Sigmoid colon (tissue), 7 donors: ENCODE measurements at regions of chr17 and their contacts with region 1.

Region 1: DNA sequence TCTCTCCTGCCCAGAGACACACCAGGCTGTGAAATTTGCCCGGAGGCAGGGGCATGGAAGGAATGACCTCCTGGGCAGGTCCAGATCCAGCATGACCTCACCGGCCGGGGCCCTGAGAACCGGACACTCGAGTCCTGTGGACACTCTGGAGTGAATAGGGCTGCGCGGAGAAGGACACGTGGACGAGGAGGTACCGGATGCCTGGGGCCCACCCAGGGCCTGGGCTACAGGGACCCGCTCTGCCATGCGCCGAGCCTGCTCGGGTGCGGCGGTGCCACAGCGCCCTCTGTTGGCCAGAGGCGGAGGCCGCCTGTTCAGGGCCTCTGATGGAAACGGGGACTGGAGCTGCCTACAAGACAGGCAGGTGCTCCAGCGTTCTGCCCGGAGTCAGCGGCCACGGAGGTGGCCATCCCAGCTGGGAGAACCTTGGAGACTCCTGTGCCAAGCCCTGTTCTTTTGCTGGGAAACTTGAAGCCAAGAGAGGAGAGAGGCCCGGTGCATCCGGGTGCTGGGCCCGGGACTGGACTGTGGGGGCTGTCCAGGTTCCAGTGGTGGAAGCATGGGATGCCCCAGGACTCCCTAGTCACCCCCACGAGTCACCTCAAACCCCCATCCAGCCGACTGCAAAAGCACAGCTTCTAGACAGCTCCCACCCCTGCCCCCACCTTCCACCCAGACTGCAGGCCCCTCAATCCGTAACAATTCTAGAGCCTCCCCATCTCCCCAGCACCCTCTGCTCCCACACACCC is 19.3 kb upstream of the NXPH3 start:
- DNase-seq: peak; percentile 88
- H3K4me3 ChIP-seq: no peak overlapping the region
- H3K27ac ChIP-seq: no peak overlapping the region
- H3K4me1 ChIP-seq: peaks cover 0 to 8% (median 7%) of the 10 kb centered on the region in 4 donors
- H3K27me3 ChIP-seq: no peaks in the 10 kb centered on the region
- CTCF ChIP-seq: peak; percentile 91 to 100 (median 94)
- EP300 ChIP-seq: no peak
- POLR2A ChIP-seq: no peak

Region 2: GRCh38 chr17:49315551-49316257 is 240.7 kb before region 1 on chr17:
- intact Hi-C with region 1: loop called (anchors 5 kb)
- DNase-seq: peak; percentile 89
- H3K4me3 ChIP-seq: no peak overlapping the region
- H3K27ac ChIP-seq: peak overlapping the region in 3 of 4 donors; percentile 23 to 44 (median 38)
- H3K4me1 ChIP-seq: peaks cover 0 to 42% (median 33%) of the 10 kb centered on the region in 4 donors
- H3K27me3 ChIP-seq: no peaks in the 10 kb centered on the region
- CTCF ChIP-seq: peak; percentile 52 to 83 (median 62)
- EP300 ChIP-seq: no peak
- POLR2A ChIP-seq: no peak

Region 3: GRCh38 chr17:49407981-49408501 is 148.4 kb before region 1 on chr17:
- intact Hi-C with region 1: loop called (anchors 5 kb)
- DNase-seq: peak; percentile 87
- H3K4me3 ChIP-seq: no peak overlapping the region
- H3K27ac ChIP-seq: peak overlapping the region in 1 of 4 donors; percentile 26
- H3K4me1 ChIP-seq: peaks cover 0 to 10% (median 8%) of the 10 kb centered on the region in 4 donors
- H3K27me3 ChIP-seq: no peaks in the 10 kb centered on the region
- CTCF ChIP-seq: peak in 3 of 4 experiments; percentile 28 to 54 (median 36)
- EP300 ChIP-seq: no peak
- POLR2A ChIP-seq: no peak

Region 4: DNA sequence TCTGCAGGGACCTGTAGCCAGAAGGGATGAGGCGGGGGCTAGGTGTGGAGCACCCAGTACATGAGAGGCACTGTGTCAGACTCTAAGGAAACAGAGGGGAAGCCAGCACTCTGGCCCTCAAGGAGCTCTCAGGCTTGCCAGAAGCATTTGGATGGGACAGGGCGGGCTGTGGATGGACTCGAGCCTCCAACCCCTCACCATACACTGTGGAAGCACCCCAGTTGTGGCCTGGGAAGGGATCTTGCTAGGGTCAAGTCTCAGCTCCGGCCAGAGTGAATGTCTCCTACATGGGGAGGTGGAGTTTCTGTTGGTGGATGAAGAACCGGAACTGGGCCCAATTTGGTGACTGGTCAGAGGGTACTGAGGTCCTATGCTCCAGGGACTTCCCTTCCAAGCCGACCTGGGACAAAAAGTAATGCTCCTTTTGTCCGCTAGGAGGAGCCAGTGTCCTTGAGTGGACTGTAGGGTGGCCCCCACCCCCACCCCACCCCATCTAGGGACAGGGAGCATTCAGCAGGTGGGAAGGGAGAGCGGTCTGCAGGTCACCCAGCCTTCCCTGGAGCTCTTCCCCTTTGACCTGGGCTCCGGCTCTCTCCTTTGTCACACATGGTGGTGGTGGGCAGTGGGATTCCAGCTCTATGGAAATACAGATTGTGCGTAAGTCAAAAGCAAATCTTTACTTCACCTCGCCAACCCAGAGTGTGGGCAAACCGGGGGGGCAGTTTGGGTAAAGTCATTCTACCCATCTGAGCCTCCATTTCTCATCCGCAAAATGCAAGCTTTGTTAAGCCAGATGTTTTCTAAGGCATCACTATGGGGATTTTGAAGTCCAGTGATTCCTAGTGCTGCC is 121.4 kb before region 1 on chr17:
- intact Hi-C with region 1: loop called (anchors 1 kb)
- DNase-seq: no peak
- H3K4me3 ChIP-seq: no peak overlapping the region
- H3K27ac ChIP-seq: no peak overlapping the region
- H3K4me1 ChIP-seq: peaks cover 0 to 5% (median 0%) of the 10 kb centered on the region in 4 donors
- H3K27me3 ChIP-seq: peaks cover 8 to 19% (median 19%) of the 10 kb centered on the region in 3 donors
- CTCF ChIP-seq: peak in 3 of 4 experiments; percentile 47 to 73 (median 61)
- EP300 ChIP-seq: no peak
- POLR2A ChIP-seq: no peak

Region 5: GRCh38 chr17:49730078-49730784 is 173.8 kb after region 1 on chr17:
- intact Hi-C with region 1: no loop called
- DNase-seq: peak; percentile 94
- H3K4me3 ChIP-seq: no peak overlapping the region
- H3K27ac ChIP-seq: peak overlapping the region; percentile 83 to 88 (median 84)
- H3K4me1 ChIP-seq: peaks cover 0 to 57% (median 46%) of the 10 kb centered on the region in 4 donors
- H3K27me3 ChIP-seq: no peaks in the 10 kb centered on the region
- CTCF ChIP-seq: no peak
- EP300 ChIP-seq: peak in 2 of 4 donors; percentile 31 to 57
- POLR2A ChIP-seq: no peak

Region 6: GRCh38 chr17:49748791-49749190 is 192.4 kb after region 1 on chr17:
- intact Hi-C with region 1: no loop called
- DNase-seq: no peak
- H3K4me3 ChIP-seq: no peak overlapping the region
- H3K27ac ChIP-seq: no peak overlapping the region
- H3K4me1 ChIP-seq: peaks cover 0 to 28% (median 3%) of the 10 kb centered on the region in 4 donors
- H3K27me3 ChIP-seq: no peaks in the 10 kb centered on the region
- CTCF ChIP-seq: no peak
- EP300 ChIP-seq: no peak
- POLR2A ChIP-seq: no peak